Activated CD8-positive, alpha-beta T cell treated with anti-CD3 and anti-CD28 coated beads, Interleukin-2, amount 10 ng/mL, durations not matched to agents 7 days and 5 days (primary cell): ENCODE measurements at regions of chr17 and their contacts with region 1.

Region 1: GRCh38 chr17:44775136-44775837 is 16.5 kb downstream of the ADAM11 start:
- DNase-seq: peak; percentile 99
- ATAC-seq: peak; percentile 97
- H3K4me3 Mint-ChIP-seq: peak overlapping the region; percentile 76
- H3K27ac Mint-ChIP-seq: peak overlapping the region; percentile 81
- H3K4me1 Mint-ChIP-seq: peaks cover 16% of the 10 kb centered on the region
- H3K27me3 Mint-ChIP-seq: peaks cover 6% of the 10 kb centered on the region

Region 2: DNA sequence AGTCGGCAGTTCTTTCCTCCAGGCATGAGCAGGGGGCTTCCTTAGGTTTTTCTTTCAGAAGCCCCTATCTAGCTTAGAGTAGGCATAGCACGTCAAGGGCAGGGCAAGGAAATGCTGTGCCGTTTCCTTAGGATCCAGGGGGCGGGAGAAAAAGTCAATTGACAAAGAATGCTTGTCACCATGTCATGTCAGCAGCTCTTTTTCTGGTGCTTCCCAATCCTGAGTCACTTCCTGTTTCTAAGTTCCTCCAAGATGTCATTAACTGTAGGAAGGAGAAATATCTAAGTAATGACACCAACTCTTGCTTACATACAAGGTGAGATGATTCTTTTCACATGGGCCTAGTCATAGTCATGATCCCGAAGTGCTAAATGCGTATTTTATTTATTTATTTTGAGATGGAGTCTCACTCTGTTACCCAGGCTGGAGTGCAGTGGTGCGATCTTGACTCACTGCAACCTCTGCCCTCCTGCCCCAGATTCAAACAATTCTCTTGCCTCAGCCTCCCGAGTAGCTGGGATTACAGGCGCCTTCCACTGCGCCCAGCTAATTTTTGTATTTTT is 19.6 kb after region 1 on chr17:
- CTCF ChIA-PET with region 1: interaction called, 21 read pairs
- POLR2A ChIA-PET with region 1: interaction called, 5 read pairs
- DNase-seq: no peak
- ATAC-seq: no peak
- H3K4me3 Mint-ChIP-seq: no peak overlapping the region
- H3K27ac Mint-ChIP-seq: peak overlapping the region; percentile 24
- H3K4me1 Mint-ChIP-seq: peaks cover 17% of the 10 kb centered on the region
- H3K27me3 Mint-ChIP-seq: peaks cover 2% of the 10 kb centered on the region

Region 3: GRCh38 chr17:44864866-44865660 is 89.8 kb after region 1 on chr17:
- CTCF ChIA-PET with region 1: interaction called, 161 read pairs
- POLR2A ChIA-PET with region 1: interaction called, 3 read pairs
- DNase-seq: peak; percentile 84
- ATAC-seq: peak; percentile 83
- H3K4me3 Mint-ChIP-seq: no peak overlapping the region
- H3K27ac Mint-ChIP-seq: no peak overlapping the region
- H3K4me1 Mint-ChIP-seq: no peaks in the 10 kb centered on the region
- H3K27me3 Mint-ChIP-seq: no peaks in the 10 kb centered on the region

Region 4: DNA sequence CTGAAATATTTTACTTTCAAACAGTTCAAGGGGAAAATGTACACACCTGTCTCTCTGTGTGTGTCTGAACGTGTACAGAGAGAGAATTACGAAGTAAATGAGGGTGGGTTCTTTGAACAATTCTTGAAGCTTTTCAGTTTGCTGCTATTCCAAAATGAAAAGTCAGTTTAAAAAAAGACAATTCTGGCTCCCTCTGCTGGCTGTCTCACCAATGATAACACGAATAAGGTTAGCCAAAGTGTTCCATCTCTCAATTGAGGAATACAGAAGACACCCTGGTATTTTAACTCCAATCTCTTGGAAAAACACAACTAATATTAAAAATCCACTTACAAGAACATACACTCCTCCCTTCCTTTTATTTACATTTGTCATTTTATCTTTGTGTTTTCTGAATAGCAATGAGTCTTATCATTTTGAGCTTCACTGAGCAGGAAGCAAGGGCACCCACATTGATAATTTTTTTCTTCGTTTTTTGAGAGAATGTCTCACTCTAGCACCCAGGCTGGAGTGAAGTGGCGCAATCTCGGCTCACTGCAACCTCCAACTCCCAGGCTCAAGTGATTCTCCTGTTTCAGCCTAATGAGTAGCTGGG is 103.4 kb after region 1 on chr17:
- CTCF ChIA-PET with region 1: interaction called, 32 read pairs
- POLR2A ChIA-PET with region 1: no interaction called
- DNase-seq: peak; percentile 54
- ATAC-seq: no peak
- H3K4me3 Mint-ChIP-seq: no peak overlapping the region
- H3K27ac Mint-ChIP-seq: peak overlapping the region; percentile 4
- H3K4me1 Mint-ChIP-seq: no peaks in the 10 kb centered on the region
- H3K27me3 Mint-ChIP-seq: no peaks in the 10 kb centered on the region

Region 5: GRCh38 chr17:44899069-44899782 is 123.9 kb after region 1 on chr17 and contains the start of gene EFTUD2:
- CTCF ChIA-PET with region 1: interaction called, 12 read pairs
- POLR2A ChIA-PET with region 1: no interaction called
- DNase-seq: peak; percentile 93
- ATAC-seq: peak; percentile 93
- H3K4me3 Mint-ChIP-seq: peak within 1 kb of the TSS; percentile 92
- H3K27ac Mint-ChIP-seq: peak within 1 kb of the TSS; percentile 100
- H3K4me1 Mint-ChIP-seq: peaks cover 26% of the 10 kb centered on the region
- H3K27me3 Mint-ChIP-seq: peaks cover 4% of the 10 kb centered on the region
- total RNA-seq, gene EFTUD2: 148 to 156 TPM